CD4-positive, alpha-beta T cell (primary cell): ENCODE measurements at regions of chr2 and their contacts with region 1.

Region 1: DNA sequence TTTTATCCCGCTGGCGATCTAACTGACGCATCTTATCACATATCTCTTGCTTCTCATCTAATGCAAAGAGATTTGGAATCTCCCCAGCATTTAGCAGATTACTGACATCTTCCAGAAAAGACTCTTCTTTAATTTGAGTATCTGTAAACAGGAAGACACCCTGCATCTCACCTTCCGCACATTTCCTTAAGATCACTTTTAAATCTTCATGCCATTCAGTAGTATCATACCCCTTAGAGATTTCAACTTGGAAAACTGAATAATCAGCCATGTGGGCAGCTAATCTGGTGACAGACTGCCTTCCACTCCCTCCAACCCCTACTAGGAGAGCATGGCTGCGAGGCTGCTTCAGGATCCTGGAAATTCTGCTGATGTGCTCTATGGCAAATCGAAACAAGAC is 204.3 kb downstream of the DNAH7 start:
- DNase-seq: no peak
- ATAC-seq: no peak
- H3K4me3 ChIP-seq: no peak overlapping the region
- H3K4me3 Mint-ChIP-seq: no peak overlapping the region
- H3K27ac ChIP-seq: no peak overlapping the region
- H3K27ac Mint-ChIP-seq: no peak overlapping the region
- H3K4me1 ChIP-seq: no peaks in the 10 kb centered on the region
- H3K4me1 Mint-ChIP-seq: no peaks in the 10 kb centered on the region
- H3K27me3 ChIP-seq: no peaks in the 10 kb centered on the region
- H3K27me3 Mint-ChIP-seq: peaks cover 10% of the 10 kb centered on the region
- CTCF ChIP-seq: no peak

Region 2: DNA sequence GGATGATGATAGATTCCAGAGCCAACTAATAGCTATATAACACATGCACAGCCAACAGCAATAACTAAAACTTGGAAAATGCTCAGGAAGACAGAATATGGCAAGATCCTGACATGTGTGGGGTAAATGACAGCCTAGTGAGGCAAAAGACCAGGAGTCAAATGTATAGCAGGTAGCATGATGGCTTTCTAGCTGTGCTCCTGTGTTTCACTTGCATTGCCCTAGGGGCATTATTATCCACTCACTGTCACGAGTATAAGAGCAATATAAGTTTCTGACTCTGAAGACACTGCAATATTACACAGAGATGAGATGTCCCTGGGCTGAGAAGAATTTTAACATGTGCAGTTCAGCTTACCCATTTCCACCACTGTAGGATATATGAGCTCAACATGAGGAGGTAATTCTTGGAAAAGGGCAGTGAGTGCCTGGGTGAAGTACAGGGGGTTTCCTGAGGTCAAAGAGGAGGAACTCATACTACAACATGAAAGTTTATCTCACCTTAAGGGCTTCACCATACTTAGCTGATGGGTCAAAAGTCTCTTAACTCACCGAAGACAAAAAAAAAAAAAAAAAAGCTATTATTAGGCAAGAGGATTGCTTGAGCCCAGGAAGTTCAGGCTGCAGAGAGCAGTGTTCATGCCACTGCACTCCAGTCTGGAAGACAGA is 1592.9 kb before region 1 on chr2:
- CTCF ChIA-PET with region 1: no interaction called
- POLR2A ChIA-PET with region 1: no interaction called
- intact Hi-C with region 1: no loop called
- DNase-seq: no peak
- ATAC-seq: no peak
- H3K4me3 ChIP-seq: no peak overlapping the region
- H3K4me3 Mint-ChIP-seq: no peak overlapping the region
- H3K27ac ChIP-seq: no peak overlapping the region
- H3K27ac Mint-ChIP-seq: no peak overlapping the region
- H3K4me1 ChIP-seq: no peaks in the 10 kb centered on the region
- H3K4me1 Mint-ChIP-seq: no peaks in the 10 kb centered on the region
- H3K27me3 ChIP-seq: no peaks in the 10 kb centered on the region
- H3K27me3 Mint-ChIP-seq: no peaks in the 10 kb centered on the region
- CTCF ChIP-seq: no peak

Region 3: GRCh38 chr2:195594248-195594647 is 270.1 kb before region 1 on chr2:
- CTCF ChIA-PET with region 1: no interaction called
- POLR2A ChIA-PET with region 1: no interaction called
- intact Hi-C with region 1: no loop called
- DNase-seq: peak in 1 of 14 experiments; percentile 39
- ATAC-seq: no peak
- H3K4me3 ChIP-seq: no peak overlapping the region
- H3K4me3 Mint-ChIP-seq: no peak overlapping the region
- H3K27ac ChIP-seq: no peak overlapping the region
- H3K27ac Mint-ChIP-seq: no peak overlapping the region
- H3K4me1 ChIP-seq: peaks cover 2% of the 10 kb centered on the region
- H3K4me1 Mint-ChIP-seq: peaks cover 12% of the 10 kb centered on the region
- H3K27me3 ChIP-seq: no peaks in the 10 kb centered on the region
- H3K27me3 Mint-ChIP-seq: no peaks in the 10 kb centered on the region
- CTCF ChIP-seq: no peak

Region 4: GRCh38 chr2:195850764-195851163 is 13.6 kb before region 1 on chr2:
- CTCF ChIA-PET with region 1: interaction called, 3 read pairs
- POLR2A ChIA-PET with region 1: no interaction called
- intact Hi-C with region 1: loop called in 1 of 2 experiments (anchors 2 kb)
- DNase-seq: no peak
- ATAC-seq: no peak
- H3K4me3 ChIP-seq: no peak overlapping the region
- H3K4me3 Mint-ChIP-seq: no peak overlapping the region
- H3K27ac ChIP-seq: no peak overlapping the region
- H3K27ac Mint-ChIP-seq: no peak overlapping the region
- H3K4me1 ChIP-seq: no peaks in the 10 kb centered on the region
- H3K4me1 Mint-ChIP-seq: no peaks in the 10 kb centered on the region
- H3K27me3 ChIP-seq: no peaks in the 10 kb centered on the region
- H3K27me3 Mint-ChIP-seq: no peaks in the 10 kb centered on the region
- CTCF ChIP-seq: no peak

Region 5: GRCh38 chr2:195930082-195930481 is 65.8 kb after region 1 on chr2:
- CTCF ChIA-PET with region 1: no interaction called
- POLR2A ChIA-PET with region 1: no interaction called
- intact Hi-C with region 1: no loop called
- DNase-seq: no peak
- ATAC-seq: no peak
- H3K4me3 ChIP-seq: no peak overlapping the region
- H3K4me3 Mint-ChIP-seq: no peak overlapping the region
- H3K27ac ChIP-seq: no peak overlapping the region
- H3K27ac Mint-ChIP-seq: no peak overlapping the region
- H3K4me1 ChIP-seq: no peaks in the 10 kb centered on the region
- H3K4me1 Mint-ChIP-seq: no peaks in the 10 kb centered on the region
- H3K27me3 ChIP-seq: no peaks in the 10 kb centered on the region
- H3K27me3 Mint-ChIP-seq: no peaks in the 10 kb centered on the region
- CTCF ChIP-seq: no peak